ENCODE measurements at regions of chr5 and their contacts with region 1.

Region 1: GRCh38 chr5:134289509-134290113 is 63.7 kb upstream of the PPP2CA start:
- DNase-seq: peak; percentile 26
- H3K4me3 ChIP-seq: no peak overlapping the region
- CTCF ChIP-seq: peak; percentile 65

Region 2: GRCh38 chr5:134140530-134141201 is 148.9 kb before region 1 on chr5:
- CTCF ChIA-PET with region 1: interaction called, 26 read pairs
- POLR2A ChIA-PET with region 1: no interaction called
- DNase-seq: peak; percentile 4
- H3K4me3 ChIP-seq: no peak overlapping the region
- CTCF ChIP-seq: peak; percentile 80

Region 3: GRCh38 chr5:134176511-134177368 is 112.9 kb before region 1 on chr5 and contains the start of gene SKP1:
- CTCF ChIA-PET with region 1: interaction called, 440 read pairs
- POLR2A ChIA-PET with region 1: interaction called, 7 read pairs
- DNase-seq: no peak
- H3K4me3 ChIP-seq: peak within 1 kb of the TSS; percentile 97
- CTCF ChIP-seq: no peak

Region 4: DNA sequence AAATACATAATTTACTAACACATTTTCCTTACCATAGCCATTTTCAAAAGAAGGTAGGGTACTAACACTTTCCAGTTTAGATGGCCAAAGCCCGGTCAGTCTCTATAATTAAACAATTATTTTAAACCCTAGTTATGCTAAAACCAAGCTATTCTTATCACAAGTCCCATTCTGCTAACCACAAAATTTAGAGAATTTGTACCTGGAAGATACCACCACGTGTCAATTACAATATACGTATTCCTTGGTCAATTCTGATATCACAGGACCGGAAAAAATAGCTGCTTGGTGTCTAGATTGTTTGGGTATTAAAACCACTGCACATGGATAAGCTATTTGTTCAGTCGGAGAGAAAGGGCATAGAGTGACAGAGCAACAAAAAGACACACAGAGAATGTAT is 93.9 kb before region 1 on chr5:
- CTCF ChIA-PET with region 1: interaction called, 440 read pairs
- POLR2A ChIA-PET with region 1: no interaction called
- DNase-seq: no peak
- H3K4me3 ChIP-seq: no peak overlapping the region
- CTCF ChIP-seq: no peak

Region 5: DNA sequence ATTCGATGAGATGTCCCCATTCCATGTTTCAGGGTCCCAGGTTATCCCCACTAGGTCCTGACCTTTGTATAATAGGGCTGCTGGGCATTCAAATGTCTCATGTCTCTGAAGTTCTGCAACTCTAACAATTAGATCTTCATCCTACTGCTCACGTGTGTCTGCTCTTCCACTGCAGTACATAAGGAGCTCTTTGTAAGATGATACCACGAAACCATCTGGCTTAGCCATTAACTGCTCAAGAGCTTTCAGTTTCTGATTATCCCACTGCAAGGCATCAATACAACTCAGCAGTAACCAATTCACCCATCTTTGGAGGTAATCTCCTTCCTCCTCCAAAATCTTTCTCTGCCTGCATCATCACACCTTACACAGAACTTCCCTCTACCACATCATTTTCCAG is 13.8 kb before region 1 on chr5:
- CTCF ChIA-PET with region 1: interaction called, 61 read pairs
- POLR2A ChIA-PET with region 1: no interaction called
- DNase-seq: no peak
- H3K4me3 ChIP-seq: no peak overlapping the region
- CTCF ChIP-seq: no peak

Region 6: DNA sequence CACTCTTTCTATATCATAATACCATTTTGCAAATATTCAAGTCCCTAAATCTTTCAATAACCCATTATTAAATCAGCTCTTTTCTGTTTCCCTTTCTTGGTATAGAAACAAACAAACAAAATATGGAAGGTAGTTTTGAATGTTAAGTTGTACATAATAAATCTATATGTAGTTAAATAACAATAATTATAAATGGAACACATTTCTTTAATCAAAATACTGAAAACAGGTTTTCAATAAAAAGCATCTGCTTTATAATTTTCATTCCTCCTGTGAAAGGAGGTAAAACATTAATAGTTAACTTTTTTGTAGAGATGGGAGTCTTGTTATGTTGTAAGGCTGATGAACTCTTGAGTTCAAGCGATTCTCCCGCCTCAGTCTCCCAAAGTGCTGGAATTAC is 23.2 kb after region 1 on chr5:
- CTCF ChIA-PET with region 1: no interaction called
- POLR2A ChIA-PET with region 1: no interaction called
- DNase-seq: no peak
- H3K4me3 ChIP-seq: no peak overlapping the region
- CTCF ChIP-seq: no peak

Region 7: DNA sequence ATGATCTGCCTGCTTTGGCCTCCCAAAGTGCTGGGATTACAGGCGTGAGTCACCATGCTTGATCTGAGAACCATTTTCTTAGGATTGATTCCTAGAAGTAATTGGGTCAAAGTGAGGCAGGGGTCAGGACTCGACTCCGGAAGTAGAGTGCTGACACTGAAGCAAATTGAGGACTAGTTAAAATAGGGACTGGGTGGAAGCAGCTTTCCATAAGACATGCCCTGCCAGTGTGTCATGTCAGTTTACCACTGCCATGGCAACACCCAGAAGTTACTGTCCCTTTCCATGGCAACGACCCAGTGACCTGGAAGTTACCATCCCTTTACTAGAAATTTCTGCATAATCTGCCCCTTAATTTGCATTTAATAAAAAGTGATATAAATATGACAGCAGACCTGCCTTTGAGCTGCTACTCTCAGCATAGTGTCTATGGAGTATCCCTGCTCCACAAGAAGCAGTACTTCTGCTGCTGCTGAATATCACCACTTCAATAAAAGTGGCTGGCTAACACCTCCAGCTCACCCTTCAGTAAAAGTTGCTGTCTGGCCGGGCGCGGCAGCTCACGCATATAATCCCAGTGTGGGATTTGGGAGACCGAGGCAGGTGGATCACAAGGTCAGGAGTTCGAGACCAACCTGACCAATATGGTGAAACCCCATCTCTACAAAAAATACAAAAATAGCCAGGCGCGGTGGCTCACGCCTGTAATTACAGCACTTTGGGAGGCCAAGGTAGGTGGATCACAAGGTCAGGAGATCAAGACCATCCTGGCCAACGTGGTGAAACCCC is 188.0 kb after region 1 on chr5:
- CTCF ChIA-PET with region 1: no interaction called
- POLR2A ChIA-PET with region 1: no interaction called
- DNase-seq: no peak
- H3K4me3 ChIP-seq: no peak overlapping the region
- CTCF ChIP-seq: no peak

Region 8: DNA sequence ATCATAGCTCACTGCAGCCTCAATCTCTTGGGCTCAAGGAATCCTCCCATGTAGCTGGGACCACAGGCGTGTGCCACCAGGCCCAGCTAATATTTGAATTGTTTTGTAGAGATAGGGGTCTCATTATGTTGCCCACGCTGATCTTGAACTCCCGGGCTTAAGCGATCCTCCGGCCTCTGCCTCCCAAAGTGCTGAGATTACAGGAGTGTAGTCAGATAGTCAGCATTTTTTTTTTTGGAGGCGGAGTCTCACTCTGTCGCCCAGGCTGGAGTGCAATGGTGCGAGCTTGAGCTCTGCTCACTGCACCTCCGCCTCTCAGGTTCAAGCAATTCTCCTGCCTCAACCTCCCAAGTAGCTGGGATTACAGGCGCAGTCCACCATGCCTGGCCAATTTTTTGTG is 344.6 kb after region 1 on chr5:
- CTCF ChIA-PET with region 1: no interaction called
- POLR2A ChIA-PET with region 1: no interaction called
- DNase-seq: no peak
- H3K4me3 ChIP-seq: no peak overlapping the region
- CTCF ChIP-seq: no peak